AG04449 (cell line): ENCODE measurements at regions of chr19 and their contacts with region 1.

Region 1: DNA sequence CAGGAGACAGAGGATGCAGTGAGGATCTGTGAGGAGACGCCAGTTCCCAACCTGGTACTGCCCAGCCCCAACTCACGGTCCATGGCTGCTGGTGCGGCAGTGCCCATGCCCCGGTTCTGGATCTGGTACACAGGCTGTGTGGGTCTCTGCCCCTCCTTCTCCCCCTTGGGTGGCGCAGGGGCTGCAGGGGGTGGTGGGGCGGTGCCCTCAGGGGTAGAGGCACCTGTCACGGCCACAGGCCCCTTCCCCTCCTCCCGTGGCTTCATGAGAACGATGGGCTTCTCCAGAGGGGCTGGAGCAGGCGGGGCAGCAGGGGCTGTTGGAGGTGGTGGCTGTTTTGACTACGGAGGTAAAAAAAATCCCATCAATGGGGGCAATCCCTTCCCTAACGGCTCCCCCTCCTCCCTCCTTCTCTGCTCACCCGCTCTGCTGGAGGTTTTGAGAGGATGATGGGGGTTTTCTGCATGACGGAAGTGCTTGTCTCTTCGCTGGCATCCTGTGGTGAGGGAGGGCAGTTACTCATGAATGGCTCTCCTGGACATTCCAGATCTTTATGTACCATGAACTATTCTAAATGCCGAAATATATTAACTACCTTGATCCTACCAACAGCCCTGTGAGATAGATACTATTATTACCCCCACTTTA is 7.1 kb downstream of the SMG9 start:
- DNase-seq: no peak
- H3K4me3 ChIP-seq: no peak overlapping the region
- CTCF ChIP-seq: no peak

Region 2: DNA sequence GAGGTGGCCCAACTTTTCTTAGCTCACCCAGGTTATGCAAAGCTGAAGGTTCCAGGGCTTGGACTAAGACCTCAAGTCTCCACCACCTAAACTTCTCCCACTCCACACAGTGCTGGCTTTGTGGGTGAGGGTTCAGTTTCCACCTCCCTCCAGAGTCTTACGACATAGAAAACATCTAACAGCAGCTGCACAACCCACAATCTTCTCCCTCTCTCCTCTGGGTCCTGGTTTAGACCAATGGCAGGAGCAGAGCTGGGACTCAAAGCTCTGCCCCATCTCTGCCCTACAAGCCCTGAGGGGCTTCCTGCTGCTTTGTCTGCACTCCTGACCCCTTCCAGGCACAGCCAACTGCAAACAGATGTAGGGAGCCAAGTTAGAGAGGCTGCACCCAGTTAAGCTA is 15.8 kb before region 1 on chr19:
- CTCF ChIA-PET with region 1: interaction called, 33 read pairs
- POLR2A ChIA-PET with region 1: interaction called, 6 read pairs
- DNase-seq: no peak
- H3K4me3 ChIP-seq: no peak overlapping the region
- CTCF ChIP-seq: no peak

Region 3: DNA sequence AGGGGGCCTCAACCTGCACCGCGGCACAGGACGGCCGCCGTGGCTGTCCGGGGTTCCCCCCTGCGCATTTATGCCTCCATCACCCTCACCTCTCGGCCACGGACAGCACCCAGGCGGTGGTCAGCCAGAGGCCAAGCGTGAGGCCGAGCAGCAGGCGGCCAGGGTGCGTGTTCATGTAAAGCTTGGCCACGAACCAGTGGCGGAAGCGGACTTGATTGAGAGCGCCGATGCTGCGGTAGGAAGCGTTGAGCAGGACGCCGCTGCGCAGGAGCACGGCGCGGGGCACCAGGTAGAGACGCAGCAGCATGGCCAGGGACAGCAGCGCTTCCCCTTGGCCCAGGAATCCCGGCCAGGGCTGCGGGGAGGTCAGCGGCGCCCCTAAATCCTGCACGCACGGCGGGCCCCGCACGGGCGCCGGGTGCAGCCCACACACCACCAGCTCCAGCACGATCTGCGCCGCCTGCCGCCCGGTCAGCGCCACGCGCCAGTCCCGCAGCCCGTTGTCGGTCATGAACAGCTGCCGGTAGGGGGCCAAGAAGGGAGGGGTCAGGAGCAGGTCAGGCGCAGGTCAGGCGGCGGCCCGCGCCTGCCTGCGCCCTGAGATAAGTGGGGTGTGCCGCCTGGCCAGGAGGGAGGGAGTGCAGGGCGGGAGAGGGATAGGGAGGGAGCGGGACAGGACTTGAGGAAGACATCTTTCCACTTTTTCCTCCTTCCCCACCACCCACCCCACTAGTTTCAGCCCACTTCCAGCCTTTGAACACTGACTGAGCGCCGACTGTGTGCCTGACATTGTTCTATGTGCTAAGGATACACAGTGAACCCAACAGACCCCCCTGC is 26.6 kb after region 1 on chr19:
- CTCF ChIA-PET with region 1: interaction called, 47 read pairs
- POLR2A ChIA-PET with region 1: interaction called, 3 read pairs
- DNase-seq: no peak
- H3K4me3 ChIP-seq: peak overlapping the region; percentile 32
- CTCF ChIP-seq: peak; percentile 61

Region 4: GRCh38 chr19:43798546-43799409 is 51.1 kb after region 1 on chr19:
- CTCF ChIA-PET with region 1: interaction called, 10 read pairs
- POLR2A ChIA-PET with region 1: no interaction called
- DNase-seq: no peak
- H3K4me3 ChIP-seq: peak overlapping the region; percentile 61
- CTCF ChIP-seq: no peak